GM18951 (cell line): ENCODE measurements at regions of chr15 and their contacts with region 1.

Region 1: DNA sequence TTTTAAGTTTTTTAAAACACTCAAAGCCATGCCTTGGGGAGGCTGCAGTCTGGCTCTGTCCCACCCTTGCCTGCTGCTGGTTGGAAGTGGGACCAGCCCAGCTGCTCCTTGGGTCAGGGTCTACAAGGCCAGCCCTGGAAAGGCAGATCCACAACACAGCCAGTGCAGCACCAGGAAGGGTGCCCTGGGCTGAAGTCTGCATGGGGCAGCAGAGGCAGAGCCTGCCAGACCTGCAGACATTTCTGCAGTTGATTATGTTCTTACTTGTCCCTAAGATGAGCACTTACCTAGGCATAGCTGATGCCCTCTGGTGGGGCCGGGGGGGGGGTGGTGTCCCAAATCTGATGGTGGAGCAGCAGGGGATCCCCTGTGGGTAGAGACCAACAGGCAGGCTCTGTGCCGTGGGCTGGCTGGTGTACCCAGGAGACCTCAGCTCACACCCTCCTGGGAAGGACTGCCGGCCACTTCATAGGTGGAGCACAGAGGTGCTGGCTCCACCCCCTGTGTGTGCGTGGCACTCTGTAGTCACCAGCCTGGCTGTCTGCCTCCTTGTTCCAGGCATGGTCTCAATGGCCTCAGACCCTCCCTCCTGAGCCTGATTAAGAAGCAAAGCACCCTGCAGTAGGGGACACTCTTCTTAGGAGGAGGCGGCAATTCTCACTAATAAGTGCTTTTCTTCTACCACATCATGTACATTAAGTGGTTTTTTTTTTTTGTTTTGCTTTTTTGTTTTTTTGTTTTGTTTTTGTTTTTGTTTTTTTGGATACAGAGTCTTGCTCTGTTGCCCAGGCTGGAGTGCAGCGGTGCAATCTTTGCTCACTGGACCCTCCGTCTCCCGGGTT is 97.4 kb upstream of the KLF13 start:
- POLR2A ChIP-seq: peak; percentile 92

Region 2: GRCh38 chr15:31098953-31099740 is 130.1 kb before region 1 on chr15:
- in situ Hi-C with region 1: no loop called
- POLR2A ChIP-seq: no peak

Region 3: GRCh38 chr15:31326156-31326732 is 97.0 kb after region 1 on chr15:
- in situ Hi-C with region 1: loop called (anchors 10 kb)
- POLR2A ChIP-seq: peak; percentile 82